ENCODE measurements at regions of chr20 and their contacts with region 1.

Region 1: GRCh38 chr20:37095599-37096414 is at the start of gene RBL1:
- DNase-seq: peak; percentile 84 to 89
- ATAC-seq: peak; percentile 72 to 89 (median 84)
- H3K4me3 ChIP-seq: peak within 1 kb of the TSS; percentile 83
- H3K27ac ChIP-seq: peak within 1 kb of the TSS; percentile 81
- H3K4me1 ChIP-seq: peaks cover 11% of the 10 kb centered on the region
- H3K27me3 ChIP-seq: no peaks in the 10 kb centered on the region
- CTCF ChIP-seq: no peak
- total RNA-seq, gene RBL1: 4.0 to 10.7 (median 5.0) TPM

Region 2: GRCh38 chr20:37042986-37043972 is 52.5 kb before region 1 on chr20:
- intact Hi-C with region 1: no loop called
- DNase-seq: no peak
- ATAC-seq: no peak
- H3K4me3 ChIP-seq: no peak overlapping the region
- H3K27ac ChIP-seq: no peak overlapping the region
- H3K4me1 ChIP-seq: no peaks in the 10 kb centered on the region
- H3K27me3 ChIP-seq: no peaks in the 10 kb centered on the region
- CTCF ChIP-seq: no peak

Region 3: GRCh38 chr20:37527638-37528441 is 432.0 kb after region 1 on chr20 and contains the start of gene BLCAP:
- intact Hi-C with region 1: loop called in 1 of 2 experiments (anchors 10 kb)
- DNase-seq: peak; percentile 93 to 96
- ATAC-seq: peak; percentile 69 to 75 (median 72)
- H3K4me3 ChIP-seq: peak within 1 kb of the TSS; percentile 100
- H3K27ac ChIP-seq: peak within 1 kb of the TSS; percentile 100
- H3K4me1 ChIP-seq: peaks cover 23% of the 10 kb centered on the region
- H3K27me3 ChIP-seq: no peaks in the 10 kb centered on the region
- CTCF ChIP-seq: no peak
- total RNA-seq, gene BLCAP: 267 to 656 (median 488) TPM

Region 4: GRCh38 chr20:38957235-38957876 is 1861.5 kb after region 1 on chr20:
- intact Hi-C with region 1: no loop called
- DNase-seq: no peak
- ATAC-seq: no peak
- H3K4me3 ChIP-seq: no peak overlapping the region
- H3K27ac ChIP-seq: no peak overlapping the region
- H3K4me1 ChIP-seq: no peaks in the 10 kb centered on the region
- H3K27me3 ChIP-seq: no peaks in the 10 kb centered on the region
- CTCF ChIP-seq: no peak

Measured in psoas muscle (tissue), 8 donors.